CD14-positive monocyte (primary cell): ENCODE measurements at regions of chr7 and their contacts with region 1.

Region 1: DNA sequence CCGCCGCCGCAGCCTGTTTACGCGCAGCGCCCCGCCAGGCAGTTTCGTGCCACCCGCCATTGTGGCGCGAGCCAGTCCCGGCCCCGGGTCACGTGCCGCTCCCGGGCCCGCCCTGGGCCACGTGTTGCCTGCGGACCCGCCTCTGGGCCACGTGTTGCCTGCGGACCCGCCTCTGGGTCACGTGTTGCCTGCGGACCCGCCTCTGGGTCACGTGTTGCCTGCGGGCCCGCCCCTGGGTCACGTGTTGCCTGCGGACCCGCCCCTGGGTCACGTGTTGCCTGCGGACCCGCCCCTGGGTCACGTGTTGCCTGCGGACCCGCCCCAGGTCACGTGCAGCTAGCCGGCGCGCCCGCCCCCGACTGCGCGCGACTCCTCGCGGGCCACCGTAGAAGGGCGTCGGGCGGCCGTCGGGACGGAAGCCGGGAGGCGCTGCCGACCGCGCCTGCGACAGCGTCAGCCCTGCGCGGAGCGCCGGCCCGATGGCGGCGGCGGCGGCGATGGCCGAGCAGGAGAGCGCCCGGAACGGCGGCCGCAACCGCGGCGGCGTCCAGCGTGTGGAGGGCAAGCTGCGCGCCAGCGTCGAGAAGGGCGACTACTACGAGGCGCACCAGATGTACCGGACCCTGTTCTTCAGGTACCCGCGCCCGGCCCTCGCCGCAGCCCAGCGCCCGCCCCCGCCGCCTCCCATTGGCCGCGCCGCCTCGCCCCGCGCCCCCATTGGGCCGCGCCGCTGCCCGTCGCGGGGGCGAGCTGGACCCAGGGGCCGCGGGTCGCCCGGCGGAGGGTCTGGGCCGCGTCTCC is at the start of gene GET4:
- DNase-seq: peak; percentile 92 to 96 (median 96)
- H3K4me3 ChIP-seq: peak within 1 kb of the TSS; percentile 67 to 94 (median 78)
- H3K4me3 Mint-ChIP-seq: peak within 1 kb of the TSS; percentile 94 to 96
- H3K27ac ChIP-seq: peak within 1 kb of the TSS; percentile 60 to 80
- H3K27ac Mint-ChIP-seq: peak within 1 kb of the TSS; percentile 78 to 99 (median 91)
- H3K4me1 ChIP-seq: peaks cover 30 to 44% of the 10 kb centered on the region in 2 donors
- H3K4me1 Mint-ChIP-seq: peaks cover 24% of the 10 kb centered on the region
- H3K27me3 ChIP-seq: no peaks in the 10 kb centered on the region
- H3K27me3 Mint-ChIP-seq: peaks cover 0 to 3% (median 0%) of the 10 kb centered on the region in 3 donors
- CTCF ChIP-seq: peak; percentile 14
- polyA plus RNA-seq, gene GET4: 20.1 to 36.8 (median 25.5) TPM

Region 2: GRCh38 chr7:322111-322671 is 554.2 kb before region 1 on chr7:
- intact Hi-C with region 1: loop called (anchors 5 kb)
- DNase-seq: peak; percentile 27 to 55 (median 39)
- H3K4me3 ChIP-seq: no peak overlapping the region
- H3K4me3 Mint-ChIP-seq: peak overlapping the region in 1 of 2 donors; percentile 15
- H3K27ac ChIP-seq: no peak overlapping the region
- H3K27ac Mint-ChIP-seq: no peak overlapping the region
- H3K4me1 ChIP-seq: peaks cover 0 to 8% of the 10 kb centered on the region in 2 donors
- H3K4me1 Mint-ChIP-seq: peaks cover 7% of the 10 kb centered on the region
- H3K27me3 ChIP-seq: no peaks in the 10 kb centered on the region
- H3K27me3 Mint-ChIP-seq: peaks cover 8 to 21% (median 16%) of the 10 kb centered on the region in 3 donors
- CTCF ChIP-seq: peak; percentile 99

Region 3: GRCh38 chr7:471866-472639 is 404.3 kb before region 1 on chr7:
- intact Hi-C with region 1: no loop called
- DNase-seq: no peak
- H3K4me3 ChIP-seq: no peak overlapping the region
- H3K4me3 Mint-ChIP-seq: no peak overlapping the region
- H3K27ac ChIP-seq: no peak overlapping the region
- H3K27ac Mint-ChIP-seq: no peak overlapping the region
- H3K4me1 ChIP-seq: peaks cover 15% of the 10 kb centered on the region in 2 donors
- H3K4me1 Mint-ChIP-seq: peaks cover 18% of the 10 kb centered on the region
- H3K27me3 ChIP-seq: no peaks in the 10 kb centered on the region
- H3K27me3 Mint-ChIP-seq: peaks cover 4 to 15% (median 12%) of the 10 kb centered on the region in 3 donors
- CTCF ChIP-seq: no peak

Region 4: DNA sequence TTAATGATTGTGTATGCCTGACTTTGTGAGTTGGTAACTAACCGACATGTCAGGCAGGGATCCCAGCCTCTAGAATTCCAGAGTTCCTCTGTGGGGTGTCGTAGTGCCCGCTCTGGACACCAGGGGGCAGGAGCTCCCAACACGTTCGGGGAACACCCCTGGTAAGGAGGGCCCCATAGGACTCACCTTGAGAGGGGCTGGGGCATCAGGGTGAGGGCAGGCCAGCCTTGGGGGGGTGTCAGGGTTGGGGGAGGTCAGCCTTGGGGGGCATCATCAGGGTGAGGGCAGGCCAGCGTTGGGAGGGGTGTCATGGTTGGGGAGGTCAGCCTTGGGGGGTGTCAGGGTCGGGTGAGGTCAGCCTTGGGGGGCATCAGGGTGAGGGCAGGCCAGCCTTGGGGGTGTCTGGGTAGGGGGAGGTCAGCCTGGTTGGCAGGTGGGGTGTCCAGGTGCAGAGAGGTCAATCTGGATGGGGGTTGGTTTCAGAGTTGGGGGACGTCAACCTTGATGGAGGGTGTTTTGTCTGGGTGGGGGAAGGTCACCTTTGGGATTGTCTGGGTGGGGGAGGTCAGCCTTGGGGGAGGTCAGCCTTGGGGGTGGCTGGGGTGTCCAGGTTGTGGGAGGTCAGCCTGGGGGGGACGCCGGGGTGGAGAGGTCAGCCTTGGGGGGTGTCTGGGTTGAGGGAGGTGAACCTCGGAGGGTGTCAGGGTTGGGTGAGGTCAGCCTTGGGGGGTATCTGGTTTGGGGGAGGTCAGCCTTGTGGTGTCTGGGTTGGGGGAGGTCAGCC is 89.7 kb before region 1 on chr7:
- intact Hi-C with region 1: loop called (anchors 1 to 2 kb)
- DNase-seq: peak; percentile 40 to 56 (median 55)
- H3K4me3 ChIP-seq: no peak overlapping the region
- H3K4me3 Mint-ChIP-seq: no peak overlapping the region
- H3K27ac ChIP-seq: no peak overlapping the region
- H3K27ac Mint-ChIP-seq: peak overlapping the region in 1 of 7 donors; percentile 70
- H3K4me1 ChIP-seq: no peaks in the 10 kb centered on the region
- H3K4me1 Mint-ChIP-seq: no peaks in the 10 kb centered on the region
- H3K27me3 ChIP-seq: no peaks in the 10 kb centered on the region
- H3K27me3 Mint-ChIP-seq: peaks cover 0 to 6% (median 2%) of the 10 kb centered on the region in 3 donors
- CTCF ChIP-seq: peak; percentile 74

Region 5: DNA sequence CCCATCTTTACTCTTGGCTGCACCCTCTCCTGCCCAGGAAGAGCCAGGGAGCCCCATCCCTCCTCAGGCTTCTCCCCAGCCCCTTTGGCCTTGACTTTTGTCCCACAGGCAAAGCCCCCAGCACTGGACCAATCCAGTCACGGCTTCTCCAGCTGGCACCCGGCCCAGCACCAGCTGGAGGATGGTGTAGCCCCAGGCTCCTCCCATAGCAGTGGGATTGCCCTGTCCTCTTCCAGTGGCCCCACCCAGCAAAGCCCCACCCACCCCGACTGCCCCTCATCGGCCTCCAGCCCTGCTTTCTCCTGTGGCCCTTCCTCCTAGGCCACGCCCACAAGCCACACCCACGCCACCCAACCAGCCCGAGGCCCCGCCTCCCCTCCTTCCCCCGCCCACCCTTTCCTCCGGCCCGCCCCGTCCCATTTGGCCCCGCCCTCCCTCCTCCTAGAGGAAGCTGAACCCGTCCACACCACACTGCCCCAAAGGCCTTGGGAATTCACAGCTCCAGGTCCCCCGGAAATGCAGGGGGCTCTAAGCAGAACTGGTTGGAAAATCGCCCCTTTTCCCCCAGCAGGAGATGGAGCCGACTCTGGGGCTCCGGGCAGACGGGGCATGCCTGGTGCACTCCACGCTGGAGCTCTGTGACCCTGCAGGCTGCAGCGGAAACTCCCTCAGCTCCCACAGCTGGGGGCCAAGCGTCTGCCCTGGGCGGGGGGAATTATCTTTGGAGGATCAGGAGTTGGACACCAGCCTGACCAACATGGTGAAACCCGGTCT is 25.2 kb after region 1 on chr7:
- intact Hi-C with region 1: no loop called
- DNase-seq: peak; percentile 82 to 85 (median 84)
- H3K4me3 ChIP-seq: no peak overlapping the region
- H3K4me3 Mint-ChIP-seq: no peak overlapping the region
- H3K27ac ChIP-seq: peak overlapping the region; percentile 24 to 26
- H3K27ac Mint-ChIP-seq: peak overlapping the region; percentile 26 to 85 (median 63)
- H3K4me1 ChIP-seq: peaks cover 9 to 12% of the 10 kb centered on the region in 2 donors
- H3K4me1 Mint-ChIP-seq: peaks cover 16% of the 10 kb centered on the region
- H3K27me3 ChIP-seq: no peaks in the 10 kb centered on the region
- H3K27me3 Mint-ChIP-seq: no peaks in the 10 kb centered on the region
- CTCF ChIP-seq: no peak

Region 6: GRCh38 chr7:974820-975681 is 98.7 kb after region 1 on chr7 and contains the start of gene COX19:
- intact Hi-C with region 1: loop called in 1 of 2 experiments (anchors 2 kb)
- DNase-seq: peak; percentile 92 to 93 (median 93)
- H3K4me3 ChIP-seq: peak within 1 kb of the TSS; percentile 85 to 89 (median 87)
- H3K4me3 Mint-ChIP-seq: peak within 1 kb of the TSS; percentile 91 to 95
- H3K27ac ChIP-seq: peak within 1 kb of the TSS; percentile 92 to 98
- H3K27ac Mint-ChIP-seq: peak within 1 kb of the TSS; percentile 96 to 97 (median 97)
- H3K4me1 ChIP-seq: peaks cover 28 to 29% of the 10 kb centered on the region in 2 donors
- H3K4me1 Mint-ChIP-seq: peaks cover 29% of the 10 kb centered on the region
- H3K27me3 ChIP-seq: no peaks in the 10 kb centered on the region
- H3K27me3 Mint-ChIP-seq: peaks cover 0 to 3% (median 1%) of the 10 kb centered on the region in 3 donors
- CTCF ChIP-seq: no peak
- polyA plus RNA-seq, gene COX19: 7.4 to 15.0 (median 7.6) TPM

Region 7: DNA sequence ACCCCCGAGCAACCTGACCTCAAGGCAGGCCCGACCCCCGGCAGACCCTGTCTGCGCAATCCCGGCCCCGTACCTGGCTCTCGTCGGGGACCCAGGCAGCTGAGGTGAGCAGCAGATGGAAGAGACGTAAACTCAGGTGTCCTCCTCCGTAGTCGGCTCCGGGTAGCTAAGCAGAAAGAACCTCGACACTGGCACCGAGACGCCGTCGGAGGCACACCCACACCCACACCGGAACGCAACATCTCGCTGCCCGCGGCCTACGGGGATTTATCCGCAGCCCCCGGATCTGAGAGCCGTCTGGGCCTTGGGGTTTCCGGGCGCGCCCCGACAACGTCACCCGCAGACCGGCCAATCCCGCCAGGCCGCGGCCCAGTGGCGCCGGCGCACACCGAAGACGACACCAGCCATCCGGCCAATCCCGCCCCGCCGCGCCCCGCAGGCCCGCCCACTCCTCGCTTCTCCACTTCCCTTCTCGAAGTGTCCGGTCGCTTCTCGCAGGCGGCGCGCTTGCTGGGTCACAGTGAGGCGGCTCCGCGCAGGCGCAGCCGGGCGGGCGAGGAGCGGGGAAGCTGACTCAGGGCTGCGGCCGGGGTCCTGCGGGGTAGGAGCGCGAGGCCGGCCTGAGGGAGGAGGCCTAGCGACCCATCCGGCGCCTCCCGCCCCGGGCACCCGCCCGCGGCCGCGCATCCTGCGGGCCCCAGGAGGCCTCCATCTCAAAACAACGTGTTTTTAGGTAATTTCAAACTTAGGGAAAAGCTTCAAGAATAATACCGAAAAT is 283.7 kb after region 1 on chr7 and contains the start of gene ZFAND2A:
- intact Hi-C with region 1: loop called (anchors 10 kb)
- DNase-seq: peak; percentile 97 to 99 (median 99)
- H3K4me3 ChIP-seq: peak within 1 kb of the TSS; percentile 75 to 99 (median 95)
- H3K4me3 Mint-ChIP-seq: peak within 1 kb of the TSS; percentile 85 to 93
- H3K27ac ChIP-seq: peak within 1 kb of the TSS; percentile 79 to 91
- H3K27ac Mint-ChIP-seq: peak within 1 kb of the TSS; percentile 90 to 98 (median 95)
- H3K4me1 ChIP-seq: peaks cover 17 to 22% of the 10 kb centered on the region in 2 donors
- H3K4me1 Mint-ChIP-seq: peaks cover 23% of the 10 kb centered on the region
- H3K27me3 ChIP-seq: no peaks in the 10 kb centered on the region
- H3K27me3 Mint-ChIP-seq: peaks cover 0 to 2% (median 0%) of the 10 kb centered on the region in 3 donors
- CTCF ChIP-seq: no peak
- polyA plus RNA-seq, gene ZFAND2A: 30.6 to 126 (median 35.1) TPM